ENCODE measurements at regions of chr7 and their contacts with region 1.

Region 1: DNA sequence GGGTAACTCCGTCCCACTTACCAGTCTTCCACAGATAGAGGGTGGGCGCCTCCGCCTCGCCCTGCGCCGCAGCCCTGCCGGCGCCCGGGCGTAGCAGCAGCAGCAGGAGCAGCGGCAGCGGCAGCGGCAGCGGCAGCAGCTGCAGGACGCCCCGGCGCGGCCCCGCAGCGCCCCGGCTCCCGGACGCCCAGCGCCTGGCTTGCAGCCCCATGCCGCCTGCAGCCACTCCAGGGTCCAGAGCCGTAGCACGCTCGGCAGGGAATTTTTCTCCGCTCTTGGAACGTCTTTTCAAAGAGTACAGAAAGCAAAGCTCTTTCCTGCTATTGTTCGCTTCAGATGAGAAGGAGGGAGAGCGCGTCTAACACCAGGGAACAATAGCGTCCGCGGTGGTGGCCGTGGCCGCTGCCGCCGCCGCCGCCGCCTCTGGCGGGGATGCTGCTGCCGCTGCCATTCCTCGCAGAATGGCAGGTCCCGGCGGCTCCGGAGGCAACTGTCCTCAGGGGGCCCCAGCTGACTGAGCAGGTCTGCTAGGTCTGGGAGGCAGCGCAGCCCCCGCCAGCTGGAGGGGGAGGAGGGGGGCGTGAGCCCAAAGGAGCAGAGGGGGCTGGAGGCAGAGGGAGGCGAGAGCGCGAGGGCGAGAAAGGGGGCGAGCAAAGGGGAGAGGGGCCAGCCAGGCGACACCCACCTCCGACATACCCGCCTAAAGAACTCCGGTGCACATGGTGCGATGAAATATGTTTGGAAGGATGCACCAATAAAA is at the start of gene THSD7A:
- DNase-seq: peak; percentile 21 to 92 (median 40)

Region 2: DNA sequence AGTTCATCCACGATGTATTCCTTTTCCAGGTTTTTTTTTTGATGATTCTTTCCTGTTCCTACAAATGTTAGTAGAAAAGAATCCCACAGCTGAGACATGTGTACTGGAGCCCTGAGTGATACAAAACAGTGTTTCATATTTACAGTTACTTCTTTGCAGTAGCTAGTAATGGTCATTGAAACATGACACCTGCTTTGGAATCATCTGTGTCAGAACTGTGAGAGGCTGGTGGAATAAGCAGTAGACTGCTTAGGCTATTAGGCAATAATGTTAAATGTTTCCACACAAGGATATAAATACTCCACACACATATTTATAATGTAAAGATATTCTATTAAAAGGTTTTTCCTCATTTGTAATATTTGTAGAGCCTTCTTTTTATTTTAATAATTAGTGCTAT is 393.9 kb before region 1 on chr7:
- intact Hi-C with region 1: loop called (anchors 10 kb)
- DNase-seq: no peak

Measured in posterior cingulate gyrus (tissue), 11 donors.